Prostate gland (tissue), 2 donors: ENCODE measurements at regions of chr1 and their contacts with region 1.

Region 1: GRCh38 chr1:67685067-67685557 is at the start of gene GADD45A:
- DNase-seq: peak; percentile 99
- H3K4me3 ChIP-seq: peak within 1 kb of the TSS; percentile 70 to 71
- H3K27ac ChIP-seq: peak within 1 kb of the TSS; percentile 84 to 91
- H3K4me1 ChIP-seq: no peaks in the 10 kb centered on the region
- H3K27me3 ChIP-seq: no peaks in the 10 kb centered on the region
- CTCF ChIP-seq: peak in 2 of 4 experiments; percentile 24 to 27
- POLR2A ChIP-seq: peak; percentile 100
- total RNA-seq, gene GADD45A: 28.9 to 43.9 TPM

Region 2: GRCh38 chr1:67535474-67535873 is 149.6 kb before region 1 on chr1:
- intact Hi-C with region 1: loop called (anchors 5 kb)
- DNase-seq: peak; percentile 67
- H3K4me3 ChIP-seq: no peak overlapping the region
- H3K27ac ChIP-seq: no peak overlapping the region
- H3K4me1 ChIP-seq: no peaks in the 10 kb centered on the region
- H3K27me3 ChIP-seq: no peaks in the 10 kb centered on the region
- CTCF ChIP-seq: peak; percentile 69 to 96 (median 87)
- POLR2A ChIP-seq: no peak

Region 3: GRCh38 chr1:67561704-67562113 is 123.4 kb before region 1 on chr1:
- intact Hi-C with region 1: loop called (anchors 5 kb)
- DNase-seq: peak; percentile 92
- H3K4me3 ChIP-seq: no peak overlapping the region
- H3K27ac ChIP-seq: peak overlapping the region in 1 of 2 donors; percentile 24
- H3K4me1 ChIP-seq: no peaks in the 10 kb centered on the region
- H3K27me3 ChIP-seq: no peaks in the 10 kb centered on the region
- CTCF ChIP-seq: peak; percentile 56 to 87 (median 82)
- POLR2A ChIP-seq: no peak

Region 4: GRCh38 chr1:67646145-67647035 is 38.7 kb before region 1 on chr1:
- intact Hi-C with region 1: loop called (anchors 5 kb)
- DNase-seq: peak; percentile 36
- H3K4me3 ChIP-seq: no peak overlapping the region
- H3K27ac ChIP-seq: no peak overlapping the region
- H3K4me1 ChIP-seq: peaks cover 3% of the 10 kb centered on the region
- H3K27me3 ChIP-seq: no peaks in the 10 kb centered on the region
- CTCF ChIP-seq: no peak
- POLR2A ChIP-seq: no peak

Region 5: DNA sequence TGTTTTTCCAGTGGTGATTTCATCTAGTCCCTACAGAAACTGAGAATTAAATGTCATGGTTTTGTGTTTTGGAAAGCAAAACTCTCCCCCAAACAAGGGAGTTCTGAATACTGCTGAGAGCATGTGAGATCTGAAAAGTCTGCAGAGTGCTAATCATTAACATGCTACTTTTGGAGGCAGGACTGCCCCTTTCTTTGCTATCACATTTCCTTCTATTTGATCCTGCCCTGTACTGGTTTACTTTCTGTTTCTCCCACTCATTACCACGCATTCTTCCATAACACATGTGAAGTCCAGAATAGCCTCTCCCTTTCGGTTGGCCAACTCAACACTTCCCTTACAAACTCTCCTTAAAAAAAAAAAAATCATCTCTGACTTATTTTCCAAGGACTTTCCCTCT is 63.5 kb after region 1 on chr1:
- intact Hi-C with region 1: loop called (anchors 5 kb)
- DNase-seq: no peak
- H3K4me3 ChIP-seq: no peak overlapping the region
- H3K27ac ChIP-seq: peak overlapping the region; percentile 67 to 78
- H3K4me1 ChIP-seq: no peaks in the 10 kb centered on the region
- H3K27me3 ChIP-seq: no peaks in the 10 kb centered on the region
- CTCF ChIP-seq: no peak
- POLR2A ChIP-seq: no peak

Region 6: DNA sequence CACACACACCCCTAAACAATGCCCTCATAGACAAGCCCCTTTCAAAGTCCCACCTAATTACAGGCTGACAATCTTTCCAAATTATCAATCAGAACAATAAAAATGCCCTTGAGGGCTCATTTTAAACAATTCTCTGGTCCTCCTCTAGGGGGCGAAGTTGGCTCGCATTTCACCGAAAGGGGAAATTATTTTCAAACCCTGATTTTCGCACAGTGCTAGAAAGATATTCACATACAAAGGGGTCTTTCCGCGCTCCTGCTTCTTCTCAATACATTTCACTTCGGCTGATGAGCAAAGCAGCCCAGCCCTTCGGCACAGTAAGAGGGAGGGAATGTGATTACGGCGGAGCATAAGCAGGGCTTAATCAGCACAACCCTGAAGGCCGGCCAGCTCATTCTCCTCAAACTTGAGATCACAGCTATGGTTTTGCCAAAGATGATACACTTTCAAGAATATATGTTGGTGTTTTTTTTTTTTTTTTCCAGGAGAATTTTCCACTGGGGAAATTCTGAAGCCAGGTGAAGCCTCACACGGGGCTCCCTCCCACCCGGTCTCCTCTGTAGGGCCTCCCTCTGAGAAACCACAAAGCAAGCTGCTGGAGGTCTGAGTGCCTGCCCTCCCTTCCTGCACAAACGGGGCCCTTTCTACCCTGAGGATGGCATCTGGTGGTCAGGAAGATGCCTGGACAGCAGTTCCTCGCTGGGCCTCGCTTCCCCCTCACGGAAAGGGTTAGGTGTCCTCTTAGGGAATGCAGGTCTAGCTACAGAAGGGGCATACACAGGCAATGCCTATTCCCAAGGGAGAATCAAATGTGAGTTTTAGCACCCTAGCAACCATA is 81.2 kb after region 1 on chr1:
- intact Hi-C with region 1: no loop called
- DNase-seq: no peak
- H3K4me3 ChIP-seq: no peak overlapping the region
- H3K27ac ChIP-seq: no peak overlapping the region
- H3K4me1 ChIP-seq: no peaks in the 10 kb centered on the region
- H3K27me3 ChIP-seq: no peaks in the 10 kb centered on the region
- CTCF ChIP-seq: peak; percentile 72 to 80 (median 76)
- POLR2A ChIP-seq: no peak

Region 7: GRCh38 chr1:67832737-67833601 is 147.9 kb after region 1 on chr1 and contains the start of gene GNG12:
- intact Hi-C with region 1: loop called (anchors 10 kb)
- DNase-seq: peak; percentile 70
- H3K4me3 ChIP-seq: peak within 1 kb of the TSS; percentile 82 to 91
- H3K27ac ChIP-seq: peak within 1 kb of the TSS; percentile 89 to 90
- H3K4me1 ChIP-seq: no peaks in the 10 kb centered on the region
- H3K27me3 ChIP-seq: no peaks in the 10 kb centered on the region
- CTCF ChIP-seq: no peak
- POLR2A ChIP-seq: peak; percentile 54
- total RNA-seq, gene GNG12: 49.4 to 61.5 TPM